Right ventricle myocardium inferior (tissue), 1 donor: ENCODE measurements at regions of chr9 and their contacts with region 1.

Region 1: GRCh38 chr9:118522093-118523028 is 818.2 kb downstream of the TLR4 start:
- DNase-seq: no peak
- ATAC-seq: no peak

Region 2: GRCh38 chr9:117963493-117964090 is 558.8 kb before region 1 on chr9:
- intact Hi-C with region 1: no loop called
- DNase-seq: no peak
- ATAC-seq: no peak

Region 3: DNA sequence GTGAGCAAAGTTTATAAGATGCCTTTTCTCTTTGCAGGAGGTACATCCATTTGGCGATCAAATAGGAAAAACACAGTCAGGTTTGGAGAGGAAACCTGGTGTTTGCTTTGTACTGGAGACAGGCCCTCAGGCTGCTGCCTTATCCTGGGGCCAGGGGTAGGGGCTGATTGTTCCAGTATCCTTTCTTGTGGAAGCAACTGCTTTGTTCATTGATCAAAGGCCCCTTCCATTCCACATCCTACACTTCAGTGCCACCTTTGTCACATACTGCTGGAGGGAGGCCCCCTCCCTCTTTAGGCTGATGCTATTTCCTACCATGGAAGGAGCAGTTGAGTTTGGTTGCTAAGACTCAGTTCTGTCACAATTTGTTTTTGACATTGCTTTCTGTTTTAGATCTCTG is 40.1 kb before region 1 on chr9:
- intact Hi-C with region 1: no loop called
- DNase-seq: no peak
- ATAC-seq: no peak

Region 4: GRCh38 chr9:118635416-118635815 is 113.1 kb after region 1 on chr9:
- intact Hi-C with region 1: no loop called
- DNase-seq: no peak
- ATAC-seq: no peak

Region 5: GRCh38 chr9:118782790-118783463 is 260.6 kb after region 1 on chr9:
- intact Hi-C with region 1: no loop called
- DNase-seq: no peak
- ATAC-seq: no peak

Region 6: GRCh38 chr9:119289740-119290433 is 767.5 kb after region 1 on chr9:
- intact Hi-C with region 1: loop called (anchors 5 kb)
- DNase-seq: no peak
- ATAC-seq: peak; percentile 44